Right cardiac atrium (tissue), 5 donors: ENCODE measurements at regions of chr13 and their contacts with region 1.

Region 1: DNA sequence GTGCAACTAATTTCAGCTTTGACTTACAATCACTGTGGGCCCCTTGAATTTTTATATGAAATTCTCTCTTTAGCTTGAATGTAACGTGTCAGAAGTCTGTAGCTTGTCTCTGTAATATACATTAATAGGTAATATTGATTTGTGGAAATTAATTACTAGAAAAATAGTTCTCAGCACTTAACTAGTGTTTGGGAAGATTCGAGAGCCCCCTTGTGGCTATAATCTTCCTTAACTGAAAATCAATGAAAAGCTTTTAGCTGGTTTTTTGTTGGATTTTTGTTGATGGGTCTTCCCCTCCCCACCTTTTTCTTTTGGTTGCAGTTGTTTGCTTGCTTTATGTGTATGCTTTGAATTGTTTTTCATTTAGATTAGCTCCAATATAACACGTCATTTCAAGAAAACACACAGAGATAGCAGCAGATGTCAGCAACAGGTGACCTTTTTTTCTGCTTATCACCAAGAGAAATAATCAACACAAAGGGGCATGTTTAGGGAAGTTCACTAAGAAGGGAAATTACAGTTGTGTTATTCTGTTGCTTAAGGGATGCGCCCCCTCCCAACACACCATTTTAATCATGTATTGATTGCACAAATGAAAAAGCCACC is 176.8 kb downstream of the OXGR1 start:
- DNase-seq: no peak
- ATAC-seq: no peak
- H3K4me3 ChIP-seq: no peak overlapping the region
- H3K27ac ChIP-seq: no peak overlapping the region
- H3K4me1 ChIP-seq: peaks cover 1% of the 10 kb centered on the region
- H3K27me3 ChIP-seq: no peaks in the 10 kb centered on the region

Region 2: GRCh38 chr13:96020155-96020575 is 797.3 kb before region 1 on chr13:
- intact Hi-C with region 1: loop called in 2 of 4 experiments (anchors 5 to 10 kb)
- DNase-seq: no peak
- ATAC-seq: peak; percentile 84 to 88
- H3K4me3 ChIP-seq: no peak overlapping the region
- H3K27ac ChIP-seq: no peak overlapping the region
- H3K4me1 ChIP-seq: no peaks in the 10 kb centered on the region
- H3K27me3 ChIP-seq: no peaks in the 10 kb centered on the region

Region 3: GRCh38 chr13:96141027-96141426 is 676.4 kb before region 1 on chr13:
- intact Hi-C with region 1: loop called in 1 of 4 experiments (anchors 5 kb)
- DNase-seq: no peak
- ATAC-seq: no peak
- H3K4me3 ChIP-seq: no peak overlapping the region
- H3K27ac ChIP-seq: no peak overlapping the region
- H3K4me1 ChIP-seq: no peaks in the 10 kb centered on the region
- H3K27me3 ChIP-seq: no peaks in the 10 kb centered on the region